ENCODE measurements at regions of chr4 and their contacts with region 1.

Region 1: DNA sequence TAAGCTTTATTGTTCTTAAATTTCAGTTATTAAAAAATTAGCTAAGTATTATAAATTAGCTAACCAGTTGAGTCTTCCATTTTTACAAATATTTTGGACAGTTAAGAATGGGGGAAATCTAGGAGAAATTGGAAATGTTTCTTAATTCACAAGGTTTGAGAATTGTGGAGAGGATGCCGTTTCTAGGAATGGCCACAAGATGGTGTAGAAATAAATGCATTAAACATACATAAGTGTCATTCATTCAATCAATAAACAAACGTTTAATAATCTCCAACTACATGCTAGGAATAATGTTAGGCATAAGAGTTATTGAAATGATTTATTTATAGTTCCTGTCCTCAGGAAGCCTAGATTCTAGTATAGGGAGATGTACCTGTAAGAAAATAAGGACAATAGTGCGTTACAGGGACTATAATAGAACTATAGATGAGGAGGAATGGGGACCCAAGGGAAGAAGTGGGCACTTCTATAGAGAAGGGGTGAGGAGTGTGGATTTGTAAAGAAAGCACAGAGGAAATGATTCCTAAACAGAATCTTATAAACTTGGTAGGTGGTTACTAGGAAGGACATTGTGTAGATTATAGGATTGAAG is 195.7 kb upstream of the ANK2 start:
- DNase-seq: no peak
- ATAC-seq: peak; percentile 60
- H3K4me3 ChIP-seq: no peak overlapping the region
- H3K27ac ChIP-seq: no peak overlapping the region
- H3K4me1 ChIP-seq: peaks cover 5 to 11% of the 10 kb centered on the region in 2 experiments; a peak in 3 of 4 replicates
- H3K27me3 ChIP-seq: no peaks in the 10 kb centered on the region
- CTCF ChIP-seq: peak; percentile 43 to 60 (median 49); a peak in 5 of 6 replicates
- POLR2A ChIP-seq: no peak
- RAD21 ChIP-seq: peak; percentile 59

Region 2: GRCh38 chr4:112938461-112939058 is 84.8 kb after region 1 on chr4:
- CTCF ChIA-PET with region 1: interaction called, 6 read pairs
- POLR2A ChIA-PET with region 1: no interaction called
- RAD21 ChIA-PET with region 1: interaction called in 1 of 2 experiments, 3 read pairs
- intact Hi-C with region 1: loop called (anchors 1 kb)
- DNase-seq: peak; percentile 31
- ATAC-seq: peak; percentile 59
- H3K4me3 ChIP-seq: no peak overlapping the region
- H3K27ac ChIP-seq: no peak overlapping the region
- H3K4me1 ChIP-seq: no peaks in the 10 kb centered on the region
- H3K27me3 ChIP-seq: no peaks in the 10 kb centered on the region
- CTCF ChIP-seq: peak; percentile 72 to 88 (median 86)
- POLR2A ChIP-seq: no peak
- RAD21 ChIP-seq: peak; percentile 81

Region 3: DNA sequence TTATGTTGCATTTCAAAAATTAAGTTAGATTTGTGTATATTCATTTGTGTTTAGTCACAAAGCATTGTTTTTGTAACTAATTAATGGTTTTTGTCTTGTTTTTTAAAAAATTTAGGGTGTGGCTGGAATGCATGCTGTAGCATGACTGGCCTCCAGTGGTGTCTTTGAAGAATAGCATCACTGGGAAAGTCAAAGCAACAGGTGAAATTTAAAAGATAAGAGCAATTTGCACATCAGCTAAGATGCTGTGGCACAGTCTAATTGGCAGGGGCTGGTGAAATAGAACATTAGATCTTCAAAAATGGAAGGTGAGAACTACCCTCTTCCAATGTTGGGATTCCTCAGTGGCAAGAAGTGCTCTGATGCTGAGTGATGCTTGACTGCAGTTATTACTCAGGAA is 241.0 kb after region 1 on chr4:
- CTCF ChIA-PET with region 1: no interaction called
- POLR2A ChIA-PET with region 1: no interaction called
- RAD21 ChIA-PET with region 1: no interaction called
- intact Hi-C with region 1: loop called (anchors 2 kb)
- DNase-seq: peak; percentile 19
- ATAC-seq: peak; percentile 60
- H3K4me3 ChIP-seq: no peak overlapping the region
- H3K27ac ChIP-seq: no peak overlapping the region
- H3K4me1 ChIP-seq: no peaks in the 10 kb centered on the region
- H3K27me3 ChIP-seq: no peaks in the 10 kb centered on the region
- CTCF ChIP-seq: peak; percentile 53 to 85 (median 70); a peak in 5 of 6 replicates
- POLR2A ChIP-seq: no peak
- RAD21 ChIP-seq: peak; percentile 77